Adrenal gland (tissue), 19 donors: ENCODE measurements at regions of chr11 and their contacts with region 1.

Region 1: DNA sequence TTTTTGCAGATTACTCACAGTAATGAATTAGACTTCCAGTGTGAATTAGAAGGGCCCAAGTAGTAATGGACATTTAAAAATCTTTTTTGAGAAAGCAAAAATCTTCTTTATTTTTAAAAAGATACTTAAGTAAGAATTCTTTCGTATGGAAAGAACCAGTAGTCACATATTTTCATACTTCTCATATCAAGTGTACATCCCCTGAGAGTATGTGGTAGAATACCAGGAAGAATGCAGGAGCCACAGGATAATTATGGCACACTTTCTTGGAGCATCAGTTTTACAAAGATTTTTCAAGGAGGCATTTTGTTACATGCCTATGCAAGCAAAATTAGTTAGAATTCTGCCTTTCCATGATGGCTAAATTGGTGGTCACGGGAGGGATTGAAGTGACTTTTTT is 28.1 kb downstream of the POLD3 start:
- DNase-seq: no peak
- H3K4me3 ChIP-seq: no peak overlapping the region
- H3K27ac ChIP-seq: no peak overlapping the region
- H3K4me1 ChIP-seq: no peaks in the 10 kb centered on the region
- H3K27me3 ChIP-seq: no peaks in the 10 kb centered on the region
- CTCF ChIP-seq: no peak
- POLR2A ChIP-seq: no peak

Region 2: GRCh38 chr11:74726547-74727182 is 106.1 kb after region 1 on chr11:
- intact Hi-C with region 1: loop called (anchors 10 kb)
- DNase-seq: peak; percentile 62 to 90 (median 73)
- H3K4me3 ChIP-seq: no peak overlapping the region
- H3K27ac ChIP-seq: no peak overlapping the region
- H3K4me1 ChIP-seq: peaks cover 0 to 3% of the 10 kb centered on the region in 2 donors
- H3K27me3 ChIP-seq: peaks cover 10% of the 10 kb centered on the region
- CTCF ChIP-seq: peak; percentile 81 to 93 (median 85)
- POLR2A ChIP-seq: no peak